ENCODE measurements at regions of chr6 and their contacts with region 1.

Region 1: GRCh38 chr6:38702558-38703397 is at the start of gene GLO1:
- DNase-seq: peak; percentile 92 to 97 (median 95)
- H3K4me3 ChIP-seq: peak within 1 kb of the TSS; percentile 68
- H3K4me3 Mint-ChIP-seq: peak within 1 kb of the TSS; percentile 85 to 96 (median 92)
- H3K27ac ChIP-seq: peak within 1 kb of the TSS; percentile 81
- H3K27ac Mint-ChIP-seq: peak within 1 kb of the TSS; percentile 86 to 97 (median 93)
- H3K4me1 ChIP-seq: no peaks in the 10 kb centered on the region
- H3K4me1 Mint-ChIP-seq: peaks cover 36 to 46% (median 40%) of the 10 kb centered on the region in 3 donors
- H3K27me3 ChIP-seq: peaks cover 6% of the 10 kb centered on the region
- H3K27me3 Mint-ChIP-seq: peaks cover 15 to 16% of the 10 kb centered on the region in 2 donors
- total RNA-seq, gene GLO1: 153 to 157 TPM

Region 2: DNA sequence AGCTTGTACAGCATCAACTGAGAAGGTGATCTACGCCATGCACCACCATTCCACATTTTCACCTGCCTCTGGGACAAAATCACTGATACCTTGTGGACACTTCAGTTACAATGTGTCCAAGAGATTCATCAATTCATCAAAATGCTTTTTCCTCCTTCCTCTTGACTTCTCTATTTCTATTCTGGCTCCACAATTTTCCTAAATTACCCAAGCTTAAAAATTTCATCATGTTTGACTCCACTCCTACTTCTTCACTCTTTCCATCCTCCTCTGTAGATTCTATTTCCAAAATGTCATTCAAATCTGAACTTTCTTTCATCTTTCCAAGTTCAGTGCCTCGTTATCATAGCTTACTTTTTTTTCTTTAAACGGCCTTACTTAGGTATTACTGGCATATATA is 235.2 kb before region 1 on chr6:
- CTCF ChIA-PET with region 1: no interaction called
- POLR2A ChIA-PET with region 1: no interaction called
- DNase-seq: no peak
- H3K4me3 ChIP-seq: no peak overlapping the region
- H3K4me3 Mint-ChIP-seq: no peak overlapping the region
- H3K27ac ChIP-seq: no peak overlapping the region
- H3K27ac Mint-ChIP-seq: no peak overlapping the region
- H3K4me1 ChIP-seq: no peaks in the 10 kb centered on the region
- H3K4me1 Mint-ChIP-seq: no peaks in the 10 kb centered on the region
- H3K27me3 ChIP-seq: no peaks in the 10 kb centered on the region
- H3K27me3 Mint-ChIP-seq: no peaks in the 10 kb centered on the region

Region 3: DNA sequence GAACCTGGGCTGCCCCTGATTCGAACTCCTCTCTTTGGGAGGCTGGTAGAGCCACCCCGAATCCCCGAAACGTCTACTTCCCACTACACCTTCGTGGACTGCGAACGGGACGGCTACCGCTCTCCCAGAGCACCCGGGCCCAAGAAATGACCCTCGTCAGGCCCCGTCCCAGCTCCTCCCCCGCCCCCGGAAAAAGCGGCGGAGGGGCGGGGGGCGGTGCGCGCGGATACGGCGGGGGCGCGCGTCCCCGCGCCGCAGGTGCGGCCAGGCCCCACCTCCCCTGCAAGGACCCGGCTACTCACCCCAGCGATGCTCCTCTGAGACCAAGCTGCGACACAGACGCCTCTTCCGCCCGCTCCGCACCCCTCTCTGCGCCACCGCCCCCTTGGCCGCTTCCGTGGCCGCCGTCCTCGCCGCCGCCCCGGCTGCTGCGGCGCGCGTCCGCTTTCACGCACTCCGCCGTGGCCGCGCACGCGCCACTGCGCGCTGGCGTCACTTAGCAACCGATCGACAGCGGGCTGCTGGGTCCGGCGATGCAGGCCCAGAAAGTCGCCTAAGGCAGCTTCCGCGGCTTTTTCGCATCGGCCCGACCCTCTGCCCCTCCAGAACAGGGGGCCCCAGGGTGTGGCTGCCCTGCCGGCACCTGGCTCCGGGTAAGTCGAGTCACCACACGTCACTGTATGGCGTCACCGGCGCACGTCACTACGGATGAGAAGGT is 63.1 kb before region 1 on chr6 and contains the start of gene BTBD9:
- CTCF ChIA-PET with region 1: interaction called, 3 read pairs
- POLR2A ChIA-PET with region 1: interaction called, 12 read pairs
- DNase-seq: peak; percentile 75 to 90 (median 88)
- H3K4me3 ChIP-seq: peak within 1 kb of the TSS; percentile 92
- H3K4me3 Mint-ChIP-seq: peak within 1 kb of the TSS; percentile 87 to 98 (median 92)
- H3K27ac ChIP-seq: peak within 1 kb of the TSS; percentile 99
- H3K27ac Mint-ChIP-seq: peak within 1 kb of the TSS; percentile 84 to 98 (median 97)
- H3K4me1 ChIP-seq: peaks cover 36% of the 10 kb centered on the region
- H3K4me1 Mint-ChIP-seq: peaks cover 39 to 69% (median 58%) of the 10 kb centered on the region in 3 donors
- H3K27me3 ChIP-seq: no peaks in the 10 kb centered on the region
- H3K27me3 Mint-ChIP-seq: no peaks in the 10 kb centered on the region
- total RNA-seq, gene BTBD9: 12.2 to 14.9 TPM

Region 4: GRCh38 chr6:38713812-38714211 is 11.0 kb after region 1 on chr6:
- CTCF ChIA-PET with region 1: interaction called, 14 read pairs
- POLR2A ChIA-PET with region 1: interaction called, 41 read pairs
- DNase-seq: peak in 4 of 5 donors; percentile 12 to 82 (median 28)
- H3K4me3 ChIP-seq: no peak overlapping the region
- H3K4me3 Mint-ChIP-seq: peak overlapping the region in 6 of 7 donors; percentile 2 to 84 (median 64)
- H3K27ac ChIP-seq: no peak overlapping the region
- H3K27ac Mint-ChIP-seq: peak overlapping the region; percentile 31 to 96 (median 84)
- H3K4me1 ChIP-seq: peaks cover 16% of the 10 kb centered on the region
- H3K4me1 Mint-ChIP-seq: peaks cover 17 to 26% (median 22%) of the 10 kb centered on the region in 3 donors
- H3K27me3 ChIP-seq: no peaks in the 10 kb centered on the region
- H3K27me3 Mint-ChIP-seq: peaks cover 2 to 25% of the 10 kb centered on the region in 2 donors

Measured in CD8-positive, alpha-beta memory T cell (primary cell).